Endothelial cell of umbilical vein (primary cell): ENCODE measurements at regions of chr2 and their contacts with region 1.

Region 1: GRCh38 chr2:226649871-226650660 is 149.6 kb downstream of the IRS1 start:
- DNase-seq: peak; percentile 92
- H3K4me3 ChIP-seq: no peak overlapping the region
- H3K27ac ChIP-seq: no peak overlapping the region
- H3K4me1 ChIP-seq: peaks cover 5% of the 10 kb centered on the region
- H3K27me3 ChIP-seq: peaks cover 20 to 24% of the 10 kb centered on the region in 2 experiments
- CTCF ChIP-seq: no peak
- POLR2A ChIP-seq: peak; percentile 23

Region 2: GRCh38 chr2:225735844-225736243 is 914.2 kb before region 1 on chr2:
- CTCF ChIA-PET with region 1: no interaction called
- POLR2A ChIA-PET with region 1: no interaction called
- dilution Hi-C with region 1: no loop called
- intact Hi-C with region 1: loop called (anchors 5 kb)
- DNase-seq: peak; percentile 89
- H3K4me3 ChIP-seq: no peak overlapping the region
- H3K27ac ChIP-seq: peak overlapping the region; percentile 34
- H3K4me1 ChIP-seq: peaks cover 44% of the 10 kb centered on the region
- H3K27me3 ChIP-seq: no peaks in the 10 kb centered on the region
- CTCF ChIP-seq: no peak
- POLR2A ChIP-seq: no peak

Region 3: DNA sequence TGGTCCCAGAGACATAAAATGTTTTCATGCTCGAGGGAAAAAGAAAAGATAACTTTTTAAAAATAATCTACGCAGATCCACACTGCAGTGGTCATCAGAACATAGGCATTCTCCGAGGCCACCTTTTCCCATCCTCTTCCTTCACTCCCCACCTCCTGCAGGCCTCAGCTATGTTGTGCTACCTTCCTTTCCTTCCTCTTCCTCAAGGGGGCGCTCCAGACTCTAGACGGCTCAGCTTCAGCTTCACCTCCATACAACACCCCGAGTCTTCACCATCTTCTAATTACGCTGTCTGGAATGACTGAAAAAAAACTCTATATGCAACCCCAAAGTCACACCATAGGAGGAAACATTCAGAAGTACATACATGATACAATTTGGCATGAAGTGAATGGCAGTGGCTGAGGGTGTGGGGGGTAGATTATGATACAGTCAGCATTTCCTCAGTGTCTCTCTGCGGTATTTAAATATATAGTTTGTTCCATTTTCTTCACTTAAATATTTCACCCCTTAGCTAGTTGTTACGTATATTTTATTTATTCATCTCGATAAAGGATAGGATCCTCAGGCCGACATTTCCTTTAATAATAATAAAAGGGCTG is 434.1 kb before region 1 on chr2:
- CTCF ChIA-PET with region 1: no interaction called
- POLR2A ChIA-PET with region 1: no interaction called
- dilution Hi-C with region 1: no loop called
- intact Hi-C with region 1: loop called (anchors 5 kb)
- DNase-seq: peak; percentile 10
- H3K4me3 ChIP-seq: no peak overlapping the region
- H3K27ac ChIP-seq: no peak overlapping the region
- H3K4me1 ChIP-seq: peaks cover 3% of the 10 kb centered on the region
- H3K27me3 ChIP-seq: no peaks in the 10 kb centered on the region
- CTCF ChIP-seq: peak; percentile 23 to 34
- POLR2A ChIP-seq: no peak

Region 4: DNA sequence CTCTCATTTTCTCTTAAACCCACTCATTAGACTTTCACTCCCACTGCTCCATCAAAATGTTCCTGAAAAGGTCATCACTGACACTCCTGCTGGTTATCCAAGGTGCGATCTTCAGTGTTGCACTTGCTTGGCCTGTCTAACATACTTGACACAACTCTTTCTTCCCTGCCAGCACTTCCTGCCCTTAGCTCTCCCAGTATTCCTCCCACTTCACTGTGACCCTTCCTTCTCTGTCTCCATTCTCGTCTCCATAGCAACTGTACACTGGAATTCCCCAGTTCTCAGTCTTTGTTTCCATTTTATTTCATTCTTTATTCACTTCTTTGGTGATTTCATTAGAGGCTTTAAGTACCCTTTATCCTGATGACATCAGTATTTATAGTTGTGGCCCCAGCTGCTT is 183.5 kb before region 1 on chr2:
- CTCF ChIA-PET with region 1: no interaction called
- POLR2A ChIA-PET with region 1: no interaction called
- dilution Hi-C with region 1: no loop called
- intact Hi-C with region 1: no loop called
- DNase-seq: no peak
- H3K4me3 ChIP-seq: no peak overlapping the region
- H3K27ac ChIP-seq: no peak overlapping the region
- H3K4me1 ChIP-seq: no peaks in the 10 kb centered on the region
- H3K27me3 ChIP-seq: no peaks in the 10 kb centered on the region
- CTCF ChIP-seq: no peak
- POLR2A ChIP-seq: no peak

Region 5: GRCh38 chr2:226478109-226478809 is 171.8 kb before region 1 on chr2:
- CTCF ChIA-PET with region 1: no interaction called
- POLR2A ChIA-PET with region 1: no interaction called
- dilution Hi-C with region 1: no loop called
- intact Hi-C with region 1: loop called (anchors 5 kb)
- DNase-seq: peak; percentile 72
- H3K4me3 ChIP-seq: no peak overlapping the region
- H3K27ac ChIP-seq: peak overlapping the region; percentile 71
- H3K4me1 ChIP-seq: peaks cover 13% of the 10 kb centered on the region
- H3K27me3 ChIP-seq: no peaks in the 10 kb centered on the region
- CTCF ChIP-seq: no peak
- POLR2A ChIP-seq: no peak

Region 6: DNA sequence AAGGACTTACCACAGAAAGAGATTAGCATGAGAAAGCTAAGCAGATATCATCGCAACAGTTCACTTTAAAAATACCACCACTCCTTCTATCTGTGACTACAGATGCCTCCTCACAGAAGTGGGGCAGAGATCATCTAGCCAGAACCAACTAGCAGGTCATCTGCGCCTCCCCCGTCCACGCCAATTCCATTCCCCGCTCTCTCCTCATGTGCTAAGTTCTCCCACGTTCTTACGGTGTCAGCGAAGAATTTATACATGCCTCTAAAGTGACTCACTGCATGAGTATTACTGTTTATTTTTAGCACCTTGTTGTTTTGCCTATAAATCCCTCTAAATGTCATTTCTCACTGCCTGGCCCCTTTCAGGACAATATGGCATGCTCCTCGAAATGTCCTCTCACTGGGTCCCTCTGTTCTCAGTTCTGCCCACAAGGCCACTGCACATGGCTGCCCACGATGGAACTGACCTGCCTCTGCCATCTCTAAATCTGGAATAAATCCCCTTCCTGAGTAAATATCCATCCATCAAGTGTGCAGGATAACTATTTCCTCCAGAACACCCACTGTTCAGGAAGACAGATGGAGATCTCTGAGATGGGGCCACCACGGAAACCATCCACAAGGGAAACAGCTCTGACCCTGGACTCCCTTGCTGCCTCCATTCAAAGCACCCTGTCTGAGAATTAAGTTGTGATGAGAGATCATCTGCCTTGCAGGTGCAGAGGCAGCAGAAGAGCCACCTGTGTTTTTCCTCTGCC is 11.9 kb after region 1 on chr2:
- CTCF ChIA-PET with region 1: no interaction called
- POLR2A ChIA-PET with region 1: interaction called, 3 read pairs
- dilution Hi-C with region 1: no loop called
- intact Hi-C with region 1: loop called (anchors 1 kb)
- DNase-seq: no peak
- H3K4me3 ChIP-seq: no peak overlapping the region
- H3K27ac ChIP-seq: no peak overlapping the region
- H3K4me1 ChIP-seq: no peaks in the 10 kb centered on the region
- H3K27me3 ChIP-seq: peaks cover 11% of the 10 kb centered on the region in 2 experiments
- CTCF ChIP-seq: no peak
- POLR2A ChIP-seq: no peak

Region 7: GRCh38 chr2:226760412-226761194 is 110.5 kb after region 1 on chr2:
- CTCF ChIA-PET with region 1: no interaction called
- POLR2A ChIA-PET with region 1: no interaction called
- dilution Hi-C with region 1: no loop called
- intact Hi-C with region 1: no loop called
- DNase-seq: no peak
- H3K4me3 ChIP-seq: no peak overlapping the region
- H3K27ac ChIP-seq: no peak overlapping the region
- H3K4me1 ChIP-seq: no peaks in the 10 kb centered on the region
- H3K27me3 ChIP-seq: no peaks in the 10 kb centered on the region
- CTCF ChIP-seq: no peak
- POLR2A ChIP-seq: no peak

Region 8: GRCh38 chr2:226835796-226836547 is 185.9 kb after region 1 on chr2 and contains the start of gene RHBDD1:
- CTCF ChIA-PET with region 1: interaction called, 3 read pairs
- POLR2A ChIA-PET with region 1: no interaction called
- dilution Hi-C with region 1: no loop called
- intact Hi-C with region 1: loop called (anchors 5 kb)
- DNase-seq: peak; percentile 93
- H3K4me3 ChIP-seq: peak within 1 kb of the TSS; percentile 74 to 84 (median 82)
- H3K27ac ChIP-seq: peak within 1 kb of the TSS; percentile 84
- H3K4me1 ChIP-seq: peaks cover 16% of the 10 kb centered on the region
- H3K27me3 ChIP-seq: no peaks in the 10 kb centered on the region
- CTCF ChIP-seq: no peak
- POLR2A ChIP-seq: peak; percentile 67
- total RNA-seq, gene RHBDD1: 16.1 and 19.4 TPM in 2 replicates